ENCODE measurements at regions of chr20 and their contacts with region 1.

Region 1: DNA sequence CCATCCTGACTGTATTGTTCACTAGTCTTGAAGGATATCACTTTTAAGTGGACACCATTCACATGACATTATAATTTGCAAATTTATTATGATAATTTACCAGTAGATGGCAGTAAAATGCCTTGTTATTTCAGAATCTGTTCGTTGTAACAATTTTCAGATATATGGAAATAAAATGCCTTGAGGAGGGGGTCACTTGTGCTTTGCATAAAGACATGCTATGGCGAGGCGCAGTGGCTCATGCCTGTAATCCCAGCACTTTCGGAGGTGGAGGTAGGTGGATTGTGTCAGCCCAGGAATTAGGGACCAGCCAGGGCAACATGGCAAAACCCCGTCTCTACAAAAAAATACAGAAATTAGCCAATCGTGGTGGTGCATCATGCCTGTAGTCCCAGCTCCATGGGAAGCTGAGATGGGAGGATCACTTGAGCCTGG is 9.0 kb upstream of the NCOA6 start:
- DNase-seq: peak; percentile 47
- ATAC-seq: peak; percentile 62
- H3K4me3 ChIP-seq: peak overlapping the region in 1 of 3 experiments; percentile 1; a peak in 1 of 6 replicates
- H3K27ac ChIP-seq: no peak overlapping the region
- H3K4me1 ChIP-seq: peaks cover 6% of the 10 kb centered on the region
- H3K27me3 ChIP-seq: no peaks in the 10 kb centered on the region
- CTCF ChIP-seq: peak; percentile 65
- EP300 ChIP-seq: no peak
- POLR2A ChIP-seq: no peak
- RAD21 ChIP-seq: peak; percentile 61; the same call in 1 of the 2 replicates

Region 2: DNA sequence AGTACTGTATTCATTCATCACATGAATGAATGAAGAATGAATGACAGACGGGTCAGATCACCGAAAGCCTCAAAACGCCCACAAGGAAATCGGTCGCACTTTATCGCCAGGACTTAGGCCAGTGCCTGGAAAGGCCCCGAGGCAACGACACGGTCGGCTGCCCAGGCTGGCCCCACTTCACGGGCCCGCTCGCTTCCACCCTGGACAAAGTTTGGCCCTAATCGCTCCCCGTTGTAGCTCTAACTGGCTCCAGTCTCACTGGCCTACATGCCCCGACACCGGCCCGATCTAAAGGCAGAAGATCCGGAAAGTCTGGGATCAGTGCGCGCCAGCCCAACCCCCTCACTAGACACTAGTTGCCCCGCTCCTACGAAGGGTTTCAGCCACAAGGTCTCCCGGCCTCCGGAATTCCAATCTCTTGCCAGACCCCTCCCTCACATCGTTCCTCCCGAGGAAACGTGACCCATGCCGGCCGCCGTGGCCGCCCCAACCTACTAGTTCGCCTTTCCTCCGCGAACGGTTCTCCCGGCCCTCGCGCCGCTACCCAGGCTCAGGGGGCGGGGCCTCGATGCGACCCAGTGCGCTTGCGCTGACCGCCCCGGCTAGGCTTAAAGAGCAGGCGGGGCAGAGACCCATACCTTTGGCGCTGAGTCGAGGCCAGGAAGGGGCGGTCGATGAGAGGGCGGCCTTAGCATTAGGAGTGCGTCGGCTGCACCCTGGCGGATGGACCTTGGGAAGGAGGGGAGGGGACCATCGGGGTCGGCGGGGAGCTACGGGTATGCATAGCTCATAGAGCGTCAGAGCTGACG is 121.0 kb after region 1 on chr20 and contains the starts of genes GSS and MYH7B:
- CTCF ChIA-PET with region 1: interaction called, 13 read pairs
- POLR2A ChIA-PET with region 1: no interaction called
- in situ Hi-C with region 1: no loop called
- intact Hi-C with region 1: loop called (anchors 1 kb)
- DNase-seq: peak; percentile 98
- ATAC-seq: peak; percentile 94
- H3K4me3 ChIP-seq: peak within 1 kb of the TSS; percentile 74 to 83 (median 82)
- H3K27ac ChIP-seq: peak within 1 kb of the TSS; percentile 72
- H3K4me1 ChIP-seq: peaks cover 41% of the 10 kb centered on the region
- H3K27me3 ChIP-seq: peaks cover 0 to 10% of the 10 kb centered on the region in 2 experiments; a peak in 2 of 5 replicates
- CTCF ChIP-seq: peak; percentile 99
- EP300 ChIP-seq: peak in 1 of 2 experiments; percentile 20; a peak in 1 of 4 replicates
- POLR2A ChIP-seq: peak; percentile 89 to 98
- RAD21 ChIP-seq: peak; percentile 75
- total RNA-seq, gene GSS: 102 and 107 TPM in 2 replicates
- total RNA-seq, gene MYH7B: 0.18 and 0.20 TPM in 2 replicates

Region 3: GRCh38 chr20:35207950-35208611 is 373.6 kb after region 1 on chr20:
- CTCF ChIA-PET with region 1: interaction called, 5 read pairs
- POLR2A ChIA-PET with region 1: no interaction called
- in situ Hi-C with region 1: no loop called
- intact Hi-C with region 1: loop called (anchors 10 kb)
- DNase-seq: peak; percentile 89
- ATAC-seq: peak; percentile 98
- H3K4me3 ChIP-seq: peak overlapping the region in 2 of 3 experiments; percentile 23 to 40; a peak in 4 of 6 replicates
- H3K27ac ChIP-seq: peak overlapping the region; percentile 46
- H3K4me1 ChIP-seq: peaks cover 18% of the 10 kb centered on the region
- H3K27me3 ChIP-seq: no peaks in the 10 kb centered on the region
- CTCF ChIP-seq: peak; percentile 97
- EP300 ChIP-seq: peak in 1 of 2 experiments; percentile 58; a peak in 1 of 4 replicates
- POLR2A ChIP-seq: no peak
- RAD21 ChIP-seq: peak; percentile 97

Region 4: DNA sequence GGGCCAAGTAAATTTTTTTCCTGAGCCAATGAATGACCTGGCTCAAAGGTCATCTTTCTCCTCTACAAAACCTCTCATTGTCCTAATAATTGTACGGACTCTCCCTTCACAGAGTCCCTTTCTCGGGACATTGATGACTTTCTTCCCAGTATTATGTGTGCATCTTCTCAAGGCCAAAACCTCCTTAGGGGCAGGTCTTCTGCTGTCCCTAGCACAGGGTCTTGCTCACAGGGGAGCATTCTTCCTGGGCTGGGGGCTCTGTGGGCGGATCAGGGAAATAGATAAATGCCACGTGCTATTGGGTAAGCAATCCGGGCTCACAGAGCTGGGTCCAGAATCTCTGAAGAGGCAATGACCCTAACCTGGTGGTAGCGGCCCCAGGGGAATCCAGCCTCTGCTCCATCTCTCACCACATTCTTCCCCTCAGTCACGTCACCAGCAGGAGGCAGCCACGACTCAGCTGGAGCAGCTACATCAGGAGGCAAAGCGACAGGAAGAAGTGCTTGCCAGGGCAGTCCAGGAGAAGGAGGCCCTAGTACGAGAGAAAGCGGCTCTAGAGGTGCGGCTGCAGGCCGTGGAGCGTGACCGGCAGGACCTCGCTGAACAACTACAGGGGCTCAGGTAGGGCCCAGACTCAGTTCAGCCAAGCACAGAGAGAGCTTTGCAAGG is 644.5 kb after region 1 on chr20:
- CTCF ChIA-PET with region 1: no interaction called
- POLR2A ChIA-PET with region 1: no interaction called
- in situ Hi-C with region 1: no loop called
- intact Hi-C with region 1: no loop called
- DNase-seq: peak; percentile 77
- ATAC-seq: peak; percentile 84
- H3K4me3 ChIP-seq: peak overlapping the region in 1 of 3 experiments; percentile 6; a peak in 1 of 6 replicates
- H3K27ac ChIP-seq: peak overlapping the region; percentile 57
- H3K4me1 ChIP-seq: peaks cover 37% of the 10 kb centered on the region
- H3K27me3 ChIP-seq: no peaks in the 10 kb centered on the region
- CTCF ChIP-seq: peak; percentile 87
- EP300 ChIP-seq: no peak
- POLR2A ChIP-seq: no peak
- RAD21 ChIP-seq: peak; percentile 50

Measured in HepG2 (cell line).